ENCODE measurements at regions of chr16 and their contacts with region 1.

Region 1: DNA sequence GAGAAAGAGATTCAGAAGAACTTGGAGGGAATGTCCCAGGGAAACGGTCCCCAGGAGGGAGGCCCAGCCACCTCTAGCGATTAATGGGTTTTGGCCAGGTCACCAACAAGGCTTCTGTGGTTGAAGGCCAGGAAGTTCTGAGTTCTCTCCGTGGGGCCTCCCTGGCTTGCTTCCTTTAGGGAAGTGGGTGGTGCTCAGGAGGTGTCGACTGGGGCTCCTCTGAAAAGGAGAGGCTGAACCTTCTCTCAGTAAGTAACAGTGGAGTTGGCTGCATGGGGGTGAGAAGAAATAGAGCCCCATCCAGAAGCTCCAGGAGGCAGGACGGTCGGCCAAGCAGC is 77.1 kb upstream of the GSE1 start:
- DNase-seq: no peak
- H3K4me3 ChIP-seq: no peak overlapping the region
- CTCF ChIP-seq: no peak

Region 2: GRCh38 chr16:85498273-85499006 is 37.6 kb before region 1 on chr16:
- in situ Hi-C with region 1: loop called (anchors 5 kb)
- DNase-seq: no peak
- H3K4me3 ChIP-seq: no peak overlapping the region
- CTCF ChIP-seq: no peak